Posterior vena cava (tissue), 2 donors: ENCODE measurements at regions of chr10 and their contacts with region 1.

Region 1: DNA sequence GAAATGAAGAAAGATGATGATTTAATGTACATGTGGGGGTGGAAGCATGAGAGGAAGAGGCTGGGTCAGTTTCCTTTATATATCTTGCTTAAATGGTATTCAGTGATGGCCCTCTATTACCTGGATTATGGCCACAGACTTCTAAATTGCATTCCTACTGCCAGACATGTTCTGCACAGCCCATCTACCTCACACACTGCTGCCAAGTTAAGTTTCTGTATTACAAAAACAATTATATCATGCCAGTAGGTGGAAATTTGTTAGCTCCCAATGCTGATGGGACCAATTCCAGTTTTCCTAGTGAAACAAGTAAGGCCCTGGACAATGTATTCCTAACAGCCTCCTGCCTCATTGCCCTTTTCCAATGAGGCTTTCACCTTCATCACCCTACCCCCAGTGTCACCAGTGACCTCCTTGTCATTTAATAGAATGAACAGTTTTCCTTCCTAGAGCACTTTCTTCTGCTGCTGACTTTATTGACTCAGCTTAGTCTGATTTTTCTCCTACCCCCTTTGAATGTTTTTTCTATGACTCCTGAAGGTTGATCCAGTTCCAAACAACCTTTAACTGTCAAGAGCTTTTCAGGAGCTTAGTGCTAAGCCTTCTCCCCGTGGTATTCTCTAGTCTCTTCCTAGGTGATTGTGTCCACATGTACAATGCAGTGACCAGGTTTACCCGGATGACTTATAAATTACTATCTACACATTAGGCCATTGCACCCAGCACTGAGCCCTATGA is 316.6 kb upstream of the ANKRD30A start:
- DNase-seq: no peak

Region 2: DNA sequence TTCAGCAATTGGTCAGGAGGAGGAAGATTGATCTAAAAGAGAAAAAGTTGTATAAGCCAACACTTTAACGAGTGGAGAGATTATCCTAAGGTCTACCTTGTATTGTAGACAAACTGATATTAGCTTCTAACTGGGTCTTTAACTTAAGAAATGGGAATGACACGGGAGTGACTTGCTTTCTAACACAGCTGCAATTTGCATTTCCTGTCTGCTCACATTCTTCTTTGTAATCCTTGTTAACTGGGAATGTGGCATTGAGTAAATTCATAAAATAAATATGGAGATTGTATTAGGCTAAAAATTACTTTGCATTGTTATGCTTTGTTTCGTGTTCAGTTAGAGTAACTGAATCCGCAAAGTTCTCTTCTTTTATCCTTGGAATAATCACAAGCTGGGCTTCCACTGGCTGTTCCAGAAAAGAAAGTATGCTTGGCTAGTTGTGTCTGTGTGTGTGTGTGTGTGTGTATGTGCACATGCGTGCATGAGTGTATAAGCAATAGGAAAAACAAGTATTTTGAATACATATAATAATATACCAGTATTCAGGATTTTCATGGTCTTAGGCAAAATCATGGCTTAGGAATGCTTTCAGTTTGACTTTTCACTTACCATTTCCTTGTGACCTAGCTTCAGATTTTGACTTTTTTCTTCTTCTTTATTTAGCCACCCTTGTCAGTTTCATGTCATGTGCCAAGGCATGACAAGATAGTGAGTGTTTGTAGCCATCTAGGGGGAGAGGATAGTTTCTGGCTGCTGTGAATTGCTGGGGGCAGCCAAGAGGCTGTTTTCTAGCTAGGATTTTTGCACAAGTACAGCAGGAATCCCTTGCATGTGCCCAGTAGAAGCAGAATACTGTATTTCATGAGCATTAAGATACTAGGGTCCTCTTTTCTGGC is 1112.2 kb before region 1 on chr10:
- intact Hi-C with region 1: loop called in 1 of 2 experiments (anchors 5 kb)
- DNase-seq: no peak